ENCODE measurements at regions of chr19 and their contacts with region 1.

Region 1: DNA sequence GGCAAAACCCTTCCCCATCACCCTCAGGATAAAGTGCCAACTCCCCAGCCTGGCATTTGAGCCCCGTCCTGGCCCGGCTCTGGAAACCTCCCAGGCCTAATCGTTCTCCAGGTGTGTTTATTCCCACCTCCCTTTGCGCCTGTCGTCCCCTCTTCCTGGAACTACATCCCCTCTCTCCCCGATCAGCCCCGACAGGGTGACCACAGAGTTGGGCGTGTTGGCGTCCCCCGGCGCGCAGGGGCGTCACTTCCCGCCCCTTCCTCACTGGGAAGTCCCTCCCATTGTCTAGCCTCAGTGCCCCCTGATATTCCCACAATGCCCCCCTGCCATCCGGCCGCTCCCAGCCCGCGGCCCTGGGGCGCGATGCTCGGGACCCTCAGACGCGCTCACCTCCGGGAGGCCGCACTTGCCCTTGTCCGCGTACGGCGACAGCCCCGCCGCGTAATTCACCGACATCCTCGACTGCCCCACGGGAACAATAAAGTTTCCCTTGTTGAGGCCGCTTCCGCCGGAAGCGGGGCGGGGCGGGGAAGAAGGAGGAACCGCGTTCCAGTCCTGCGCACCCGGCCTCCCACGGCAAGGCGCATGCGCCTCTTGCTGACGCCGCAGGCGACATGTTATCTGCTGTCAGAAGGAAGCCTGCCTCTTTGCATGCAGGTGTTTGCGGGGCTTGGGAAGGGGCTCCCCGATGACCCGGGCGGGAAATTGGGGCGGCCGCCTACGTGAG is at the starts of genes ANKRD24 and SIRT6:
- DNase-seq: peak; percentile 96 to 99 (median 98)
- ATAC-seq: peak; percentile 96
- H3K4me3 ChIP-seq: peak within 1 kb of the TSS; percentile 63
- H3K27ac ChIP-seq: peak within 1 kb of the TSS; percentile 54
- H3K4me1 ChIP-seq: peaks cover 2% of the 10 kb centered on the region
- H3K27me3 ChIP-seq: no peaks in the 10 kb centered on the region
- total RNA-seq, gene ANKRD24: 0.31 to 0.88 (median 0.41) TPM
- total RNA-seq, gene SIRT6: 11.2 to 16.6 (median 13.1) TPM

Region 2: DNA sequence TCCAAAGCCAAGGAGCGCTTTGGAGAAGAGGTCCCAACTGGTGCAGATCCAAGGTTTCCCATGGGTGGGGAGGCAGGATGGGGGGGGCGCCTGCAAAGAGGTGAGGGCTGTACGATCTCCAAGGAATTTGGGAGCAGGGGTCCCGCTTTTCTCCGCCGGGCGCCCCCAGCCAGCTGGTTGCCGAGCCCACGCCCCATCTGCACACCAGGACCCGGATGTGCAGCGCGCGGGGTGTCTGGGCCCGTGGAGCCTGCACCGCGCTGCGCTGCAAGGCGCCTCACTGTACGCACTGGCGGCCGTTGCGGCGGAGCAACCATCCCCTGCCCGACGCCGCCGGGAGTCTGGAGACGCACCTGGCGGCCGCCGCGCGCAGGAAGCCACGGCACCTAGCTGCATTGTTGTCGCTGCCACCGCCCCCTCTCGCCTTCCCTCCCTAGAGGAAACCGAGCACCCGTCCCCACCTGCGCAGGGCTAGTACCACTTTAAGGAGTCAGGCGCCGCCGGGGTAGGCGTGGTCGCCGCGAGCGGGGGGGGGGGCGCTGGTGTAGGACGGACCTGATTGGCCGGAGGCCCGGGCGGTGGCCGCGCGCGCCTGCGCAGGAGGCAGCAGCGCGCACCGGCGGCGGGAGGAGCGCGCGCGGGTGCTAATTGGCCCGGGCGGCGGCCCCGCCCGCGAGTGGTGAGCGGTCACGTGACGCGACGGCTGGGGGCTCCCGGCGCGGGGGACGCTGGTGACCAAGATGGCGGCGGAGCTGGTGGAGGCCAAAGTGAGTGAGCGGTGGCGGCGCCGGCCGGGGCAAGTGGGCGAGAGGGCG is 175.0 kb before region 1 on chr19 and contains the start of gene PIAS4:
- intact Hi-C with region 1: loop called in 1 of 4 experiments (anchors 10 kb)
- DNase-seq: peak; percentile 96 to 99 (median 99)
- ATAC-seq: peak; percentile 96
- H3K4me3 ChIP-seq: peak within 1 kb of the TSS; percentile 86
- H3K27ac ChIP-seq: peak within 1 kb of the TSS; percentile 62
- H3K4me1 ChIP-seq: peaks cover 11% of the 10 kb centered on the region
- H3K27me3 ChIP-seq: no peaks in the 10 kb centered on the region
- total RNA-seq, gene PIAS4: 11.9 to 13.1 (median 12.5) TPM

Measured in right cardiac atrium (tissue), 5 donors.